PC-9 (cell line): ENCODE measurements at regions of chr1 and their contacts with region 1.

Region 1: GRCh38 chr1:167059045-167059808 is 30.9 kb downstream of the GPA33 start:
- DNase-seq: peak; percentile 58 to 63
- H3K4me3 ChIP-seq: no peak overlapping the region
- H3K27ac ChIP-seq: no peak overlapping the region
- H3K4me1 ChIP-seq: no peaks in the 10 kb centered on the region; the same call in 1 of the 2 replicates
- H3K27me3 ChIP-seq: no peaks in the 10 kb centered on the region
- CTCF ChIP-seq: peak; percentile 97

Region 2: DNA sequence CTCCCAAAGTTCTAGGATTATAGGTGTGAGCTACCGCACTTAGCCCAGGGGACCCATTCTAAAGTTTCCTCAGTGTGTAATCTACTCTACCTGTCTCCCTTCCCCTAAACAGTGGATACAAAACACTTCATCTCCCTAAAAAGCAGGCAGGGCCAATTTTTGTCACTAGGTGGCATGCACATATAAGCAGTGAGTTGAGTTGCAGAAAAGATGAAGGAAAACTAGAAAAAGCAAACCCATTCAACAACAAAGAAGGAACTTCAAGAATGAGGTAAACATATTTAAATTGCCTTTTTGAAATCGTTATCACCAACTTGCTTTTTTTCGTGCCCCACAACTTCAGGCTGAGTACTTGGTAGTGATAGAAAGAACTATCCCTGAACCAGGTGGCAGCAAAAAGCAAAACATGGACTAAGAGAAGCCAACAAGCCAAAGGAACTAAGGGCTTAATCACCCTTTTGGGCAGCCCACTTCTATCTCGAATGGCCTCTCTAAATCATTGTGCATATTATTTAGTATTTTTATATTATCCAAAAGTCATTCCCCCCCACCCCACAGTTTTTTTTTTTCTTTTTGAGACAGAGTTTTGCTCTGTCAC is 1341.2 kb before region 1 on chr1:
- CTCF ChIA-PET with region 1: no interaction called
- POLR2A ChIA-PET with region 1: no interaction called
- intact Hi-C with region 1: loop called (anchors 2 kb)
- DNase-seq: peak; percentile 38 to 41
- H3K4me3 ChIP-seq: no peak overlapping the region
- H3K27ac ChIP-seq: no peak overlapping the region
- H3K4me1 ChIP-seq: no peaks in the 10 kb centered on the region
- H3K27me3 ChIP-seq: no peaks in the 10 kb centered on the region
- CTCF ChIP-seq: peak; percentile 81

Region 3: GRCh38 chr1:165928075-165928731 is 1131.0 kb before region 1 on chr1:
- CTCF ChIA-PET with region 1: interaction called, 3 read pairs
- POLR2A ChIA-PET with region 1: no interaction called
- intact Hi-C with region 1: loop called (anchors 2 kb)
- DNase-seq: peak in 1 of 2 experiments; percentile 17
- H3K4me3 ChIP-seq: no peak overlapping the region
- H3K27ac ChIP-seq: no peak overlapping the region
- H3K4me1 ChIP-seq: no peaks in the 10 kb centered on the region
- H3K27me3 ChIP-seq: no peaks in the 10 kb centered on the region
- CTCF ChIP-seq: peak; percentile 81

Region 4: DNA sequence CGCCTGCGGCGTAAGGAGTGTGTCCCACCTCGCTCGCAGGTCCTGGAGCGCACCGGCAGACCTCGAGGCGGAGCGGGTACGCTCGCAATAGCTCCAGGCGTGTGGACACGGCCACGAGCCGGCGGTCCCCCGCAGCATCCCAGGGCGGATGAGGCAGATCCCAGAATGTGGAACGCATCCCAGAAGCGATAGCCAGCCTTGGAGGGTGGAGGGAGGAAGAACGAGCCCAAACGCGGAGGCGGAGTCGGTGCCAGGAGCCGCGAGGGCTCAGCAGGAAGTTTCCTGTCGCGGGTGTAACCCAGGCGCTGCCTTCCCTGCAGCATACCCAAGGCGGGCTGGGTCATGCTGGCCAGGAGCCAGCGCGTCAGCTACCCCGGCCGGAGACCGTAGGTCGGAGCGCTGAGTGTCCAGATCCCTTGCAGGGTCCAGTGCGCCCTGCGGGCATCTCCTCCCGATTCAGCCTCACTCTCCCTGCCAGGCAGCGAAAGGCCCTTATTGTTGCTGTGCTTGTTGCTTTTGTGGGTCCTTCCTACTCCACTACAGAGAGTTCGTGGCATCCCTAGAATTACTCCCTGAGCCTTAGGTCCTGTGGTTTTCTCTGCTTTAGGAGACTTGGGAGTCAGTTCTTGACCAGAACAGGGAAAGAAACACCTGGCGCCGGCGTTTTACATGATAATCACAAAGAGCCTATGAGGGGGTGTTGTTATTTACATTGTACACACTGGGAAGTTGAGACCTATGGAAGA is 62.3 kb after region 1 on chr1:
- CTCF ChIA-PET with region 1: interaction called, 10 read pairs
- POLR2A ChIA-PET with region 1: no interaction called
- intact Hi-C with region 1: no loop called
- DNase-seq: peak; percentile 76 to 88
- H3K4me3 ChIP-seq: peak overlapping the region; percentile 91
- H3K27ac ChIP-seq: peak overlapping the region; percentile 59
- H3K4me1 ChIP-seq: peaks cover 18% of the 10 kb centered on the region; the same call in 1 of the 2 replicates
- H3K27me3 ChIP-seq: no peaks in the 10 kb centered on the region
- CTCF ChIP-seq: no peak

Region 5: GRCh38 chr1:167442124-167442848 is 383.1 kb after region 1 on chr1:
- CTCF ChIA-PET with region 1: interaction called, 3 read pairs
- POLR2A ChIA-PET with region 1: no interaction called
- intact Hi-C with region 1: loop called (anchors 2 kb)
- DNase-seq: peak; percentile 92
- H3K4me3 ChIP-seq: 0 out of 2 replicates have a peak overlapping the region, but pooled peaks have one; percentile 3
- H3K27ac ChIP-seq: peak overlapping the region; percentile 52
- H3K4me1 ChIP-seq: peaks cover 21% of the 10 kb centered on the region
- H3K27me3 ChIP-seq: no peaks in the 10 kb centered on the region
- CTCF ChIP-seq: peak; percentile 91

Region 6: DNA sequence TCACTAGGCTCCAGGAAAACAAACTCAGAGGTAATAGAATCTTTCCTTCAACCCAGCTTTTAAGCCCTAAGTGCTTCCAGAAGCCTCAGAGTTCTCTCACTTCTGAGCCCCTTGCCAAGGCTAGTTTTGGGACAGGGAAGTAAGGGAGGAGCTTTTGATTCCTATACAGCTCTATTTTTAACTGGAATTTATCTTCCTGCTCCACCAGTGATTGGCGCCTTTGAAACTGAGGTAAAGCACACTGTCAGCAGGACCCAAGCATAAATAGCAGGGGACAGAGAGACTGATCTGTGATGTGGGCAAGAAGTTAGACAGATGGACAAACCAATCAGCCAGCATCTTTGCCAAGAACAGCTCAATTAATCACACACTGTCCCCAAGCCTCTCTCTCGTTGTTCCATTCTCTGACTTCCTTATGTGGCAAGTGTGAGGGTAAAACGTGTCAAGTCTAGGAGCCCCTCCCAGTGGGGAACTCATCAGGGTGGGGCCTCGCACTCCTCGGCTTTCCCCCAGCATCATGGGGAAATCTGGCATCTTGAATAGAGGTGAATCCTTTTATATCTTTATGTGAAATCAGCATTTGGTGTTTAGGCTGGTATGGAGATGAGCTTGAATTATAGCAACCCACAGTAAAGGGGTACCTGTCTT is 622.3 kb after region 1 on chr1:
- CTCF ChIA-PET with region 1: interaction called, 12 read pairs
- POLR2A ChIA-PET with region 1: no interaction called
- intact Hi-C with region 1: no loop called
- DNase-seq: no peak
- H3K4me3 ChIP-seq: no peak overlapping the region
- H3K27ac ChIP-seq: no peak overlapping the region
- H3K4me1 ChIP-seq: no peaks in the 10 kb centered on the region
- H3K27me3 ChIP-seq: no peaks in the 10 kb centered on the region
- CTCF ChIP-seq: no peak